Activated naive CD4-positive, alpha-beta T cell treated with anti-CD3 and anti-CD28 coated beads for 36 hours (primary cell): ENCODE measurements at regions of chr9 and their contacts with region 1.

Region 1: GRCh38 chr9:99140685-99141314 is 35.9 kb downstream of the TGFBR1 start:
- DNase-seq: peak; percentile 67
- H3K4me3 Mint-ChIP-seq: no peak overlapping the region
- H3K27ac Mint-ChIP-seq: no peak overlapping the region
- H3K4me1 Mint-ChIP-seq: peaks cover 29% of the 10 kb centered on the region
- H3K27me3 Mint-ChIP-seq: no peaks in the 10 kb centered on the region

Region 2: DNA sequence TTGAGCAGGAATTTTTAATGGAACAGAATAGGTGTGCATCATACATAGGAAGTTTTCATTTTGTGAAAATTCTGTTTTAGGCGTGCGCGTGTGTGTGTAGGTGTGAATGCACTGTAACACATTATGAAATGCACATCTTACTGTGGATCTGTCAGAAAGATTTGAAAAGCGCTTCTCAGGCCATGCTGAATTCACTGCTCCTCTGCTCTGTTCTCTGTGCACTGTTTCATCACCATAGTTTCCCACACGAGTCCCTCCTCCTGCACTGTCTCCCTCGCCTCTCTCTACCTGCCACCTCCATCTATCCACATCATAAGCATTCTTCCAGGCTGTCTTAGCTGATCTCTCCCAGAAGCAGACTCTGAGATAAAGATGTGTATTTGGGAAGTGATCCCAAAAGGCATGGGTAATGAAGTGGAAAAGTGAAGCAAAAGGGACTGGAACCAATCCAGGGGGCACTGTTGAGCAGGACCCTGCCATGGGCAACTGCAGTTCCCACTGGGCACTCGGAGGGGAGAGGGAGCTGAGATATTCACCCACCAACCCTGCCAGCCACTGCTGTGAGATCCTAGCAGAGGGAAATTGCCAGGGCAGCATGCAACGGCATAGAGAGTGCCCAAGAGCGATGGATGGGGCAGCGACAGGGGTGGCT is 498.0 kb before region 1 on chr9:
- CTCF ChIA-PET with region 1: no interaction called
- intact Hi-C with region 1: no loop called
- DNase-seq: no peak
- H3K4me3 Mint-ChIP-seq: no peak overlapping the region
- H3K27ac Mint-ChIP-seq: no peak overlapping the region
- H3K4me1 Mint-ChIP-seq: no peaks in the 10 kb centered on the region
- H3K27me3 Mint-ChIP-seq: peaks cover 14% of the 10 kb centered on the region

Region 3: DNA sequence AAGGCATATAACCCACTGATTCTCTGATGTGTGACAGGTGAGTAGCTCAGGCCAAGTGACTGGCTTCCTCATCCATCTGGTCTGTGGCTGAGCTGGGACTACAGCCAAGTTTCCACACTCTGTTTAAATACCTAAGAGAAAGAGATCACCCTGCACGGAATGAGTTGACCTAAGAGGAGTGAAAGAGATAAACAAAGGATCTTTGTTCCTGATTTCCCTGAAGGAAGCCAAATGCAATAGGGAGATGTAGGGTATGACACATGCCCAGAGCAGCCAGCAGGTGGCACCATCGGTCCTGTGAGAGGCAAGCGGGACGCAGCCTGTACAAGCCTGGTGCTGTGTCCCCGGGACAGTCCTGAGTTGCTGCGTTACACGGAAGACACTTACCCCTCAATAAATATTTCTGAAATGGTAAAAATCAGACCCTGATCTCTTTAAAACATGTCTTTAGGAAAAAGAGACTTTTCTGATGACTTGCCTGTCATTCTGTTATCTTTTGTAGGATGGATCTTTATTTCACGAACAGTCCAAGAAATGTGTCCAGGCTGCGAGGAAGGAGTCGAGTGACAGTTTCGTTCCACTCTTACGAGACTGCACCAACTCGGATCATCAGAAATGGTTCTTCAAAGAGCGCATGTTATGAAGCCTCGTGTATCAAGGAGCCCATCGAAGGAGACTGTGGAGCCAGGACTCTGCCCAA is 292.2 kb before region 1 on chr9:
- CTCF ChIA-PET with region 1: interaction called, 17 read pairs
- intact Hi-C with region 1: loop called (anchors 1 kb)
- DNase-seq: peak; percentile 89
- H3K4me3 Mint-ChIP-seq: no peak overlapping the region
- H3K27ac Mint-ChIP-seq: no peak overlapping the region
- H3K4me1 Mint-ChIP-seq: peaks cover 11% of the 10 kb centered on the region
- H3K27me3 Mint-ChIP-seq: no peaks in the 10 kb centered on the region

Region 4: DNA sequence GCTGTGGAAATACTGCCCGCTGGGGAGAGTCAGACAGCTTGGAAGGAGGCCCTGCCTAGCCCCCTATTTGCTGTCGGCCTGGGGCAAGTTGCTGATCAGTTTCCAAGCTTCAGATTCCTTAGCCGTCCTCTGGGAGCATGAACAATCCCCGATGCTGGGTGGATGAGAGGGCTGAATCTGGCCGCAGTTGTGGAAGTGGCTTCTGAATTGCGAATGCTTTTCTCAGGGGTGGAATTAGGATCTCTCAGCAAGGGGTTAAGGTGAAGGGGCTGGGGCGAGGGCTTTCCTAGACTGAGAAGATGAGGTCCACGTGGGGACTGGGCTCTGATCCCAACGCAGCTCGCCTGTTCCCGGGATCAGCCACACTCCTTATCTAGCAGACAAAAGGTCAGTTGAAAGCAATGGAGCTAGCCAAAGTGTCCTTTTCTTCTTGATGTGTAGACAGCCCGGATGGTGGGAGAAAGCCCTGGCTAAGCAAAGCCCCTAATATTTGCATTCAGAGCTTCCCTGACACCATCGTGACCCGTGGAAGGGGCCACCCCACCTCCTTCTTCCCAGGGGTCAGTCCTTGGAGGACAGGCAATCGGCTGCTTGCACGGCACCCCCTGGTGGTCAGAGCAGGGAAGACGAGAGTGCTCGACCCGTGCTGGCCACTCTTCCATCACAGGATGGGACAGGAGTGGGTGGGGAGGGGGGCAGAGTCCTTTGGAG is 142.2 kb before region 1 on chr9:
- CTCF ChIA-PET with region 1: interaction called, 177 read pairs
- intact Hi-C with region 1: loop called (anchors 1 kb)
- DNase-seq: peak; percentile 69
- H3K4me3 Mint-ChIP-seq: no peak overlapping the region
- H3K27ac Mint-ChIP-seq: no peak overlapping the region
- H3K4me1 Mint-ChIP-seq: peaks cover 21% of the 10 kb centered on the region
- H3K27me3 Mint-ChIP-seq: peaks cover 4% of the 10 kb centered on the region

Region 5: DNA sequence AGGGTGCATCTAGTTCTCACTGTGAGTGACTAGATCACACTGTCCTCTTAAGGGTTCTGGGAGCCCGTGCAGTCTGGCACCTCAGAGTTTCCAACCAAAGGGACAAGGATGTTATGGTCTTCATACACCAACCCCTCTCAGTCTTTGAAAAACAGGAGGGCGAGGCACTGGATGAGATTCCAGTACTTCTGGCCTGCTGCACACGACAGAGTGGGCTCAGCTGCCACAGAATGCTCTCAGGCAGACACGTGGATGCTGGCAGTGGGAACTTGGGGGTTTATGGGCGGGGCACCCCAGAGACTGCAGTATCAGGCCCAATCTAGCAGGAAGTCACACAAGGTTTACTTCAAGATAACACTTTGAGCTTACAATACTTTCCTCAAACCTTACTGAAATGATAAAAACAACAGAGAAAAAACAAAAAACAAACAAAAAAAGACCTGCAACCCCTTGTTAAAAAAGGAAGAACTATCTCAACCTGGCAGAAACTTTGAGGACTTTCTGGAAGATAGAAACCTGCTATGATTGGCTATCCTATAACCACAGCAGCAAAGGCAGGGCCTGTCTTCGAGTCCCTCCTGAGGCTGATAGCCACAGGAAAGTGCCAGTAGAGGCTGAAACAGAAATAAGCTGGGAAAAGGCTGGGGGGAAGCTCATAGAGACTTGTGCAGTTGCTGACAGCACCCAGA is 64.2 kb before region 1 on chr9:
- CTCF ChIA-PET with region 1: interaction called, 14 read pairs
- intact Hi-C with region 1: no loop called
- DNase-seq: peak; percentile 30
- H3K4me3 Mint-ChIP-seq: no peak overlapping the region
- H3K27ac Mint-ChIP-seq: no peak overlapping the region
- H3K4me1 Mint-ChIP-seq: peaks cover 23% of the 10 kb centered on the region
- H3K27me3 Mint-ChIP-seq: no peaks in the 10 kb centered on the region

Region 6: GRCh38 chr9:99112750-99113413 is 27.9 kb before region 1 on chr9:
- CTCF ChIA-PET with region 1: interaction called, 17 read pairs
- intact Hi-C with region 1: loop called (anchors 1 kb)
- DNase-seq: peak; percentile 58
- H3K4me3 Mint-ChIP-seq: peak overlapping the region; percentile 57
- H3K27ac Mint-ChIP-seq: peak overlapping the region; percentile 73
- H3K4me1 Mint-ChIP-seq: peaks cover 83% of the 10 kb centered on the region
- H3K27me3 Mint-ChIP-seq: no peaks in the 10 kb centered on the region